PC-9 (cell line): ENCODE measurements at regions of chr18 and their contacts with region 1.

Region 1: GRCh38 chr18:63518178-63519012 is 23.8 kb upstream of the SERPINB12 start:
- DNase-seq: peak; percentile 45 to 67
- H3K4me3 ChIP-seq: no peak overlapping the region
- H3K27ac ChIP-seq: no peak overlapping the region
- H3K4me1 ChIP-seq: no peaks in the 10 kb centered on the region
- H3K27me3 ChIP-seq: no peaks in the 10 kb centered on the region
- CTCF ChIP-seq: peak; percentile 79

Region 2: GRCh38 chr18:63131106-63131958 is 387.1 kb before region 1 on chr18:
- CTCF ChIA-PET with region 1: no interaction called
- POLR2A ChIA-PET with region 1: no interaction called
- intact Hi-C with region 1: no loop called
- DNase-seq: peak in 1 of 2 experiments; percentile 7
- H3K4me3 ChIP-seq: no peak overlapping the region
- H3K27ac ChIP-seq: no peak overlapping the region
- H3K4me1 ChIP-seq: no peaks in the 10 kb centered on the region
- H3K27me3 ChIP-seq: no peaks in the 10 kb centered on the region
- CTCF ChIP-seq: peak; percentile 68

Region 3: GRCh38 chr18:63539904-63540510 is 21.6 kb after region 1 on chr18:
- CTCF ChIA-PET with region 1: interaction called, 11 read pairs
- POLR2A ChIA-PET with region 1: no interaction called
- intact Hi-C with region 1: no loop called
- DNase-seq: peak in 1 of 2 experiments; percentile 40
- H3K4me3 ChIP-seq: no peak overlapping the region
- H3K27ac ChIP-seq: no peak overlapping the region
- H3K4me1 ChIP-seq: peaks cover 8% of the 10 kb centered on the region; the same call in 1 of the 2 replicates
- H3K27me3 ChIP-seq: no peaks in the 10 kb centered on the region
- CTCF ChIP-seq: no peak

Region 4: DNA sequence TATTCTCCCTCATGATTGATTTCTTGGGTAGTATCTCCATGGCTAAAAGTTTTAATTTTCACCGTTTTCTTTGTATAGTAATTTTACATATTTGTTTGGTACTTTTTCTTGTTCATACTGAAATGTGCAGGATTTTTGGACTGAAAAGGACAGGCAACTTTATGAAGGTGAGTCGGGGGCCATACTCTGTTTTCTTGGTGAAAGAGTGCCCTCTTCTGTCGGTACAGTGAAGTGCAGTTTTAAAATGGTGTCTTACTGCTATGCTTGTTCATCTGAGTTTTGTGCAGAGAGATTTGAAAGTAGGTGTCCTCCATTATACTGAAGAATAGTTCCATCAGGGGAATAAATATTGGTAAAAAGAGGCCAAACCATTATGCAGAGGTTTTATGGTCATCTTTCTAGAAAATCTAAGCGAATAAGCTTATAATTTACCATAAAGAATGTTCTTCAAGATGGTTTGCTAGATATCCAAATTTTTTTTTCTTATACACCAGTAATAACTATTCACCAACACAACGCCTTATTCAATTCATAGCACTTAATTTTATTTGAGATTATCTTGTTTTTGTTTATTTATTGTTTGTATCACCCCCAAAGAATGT is 60.1 kb after region 1 on chr18:
- CTCF ChIA-PET with region 1: interaction called, 9 read pairs
- POLR2A ChIA-PET with region 1: no interaction called
- intact Hi-C with region 1: loop called (anchors 1 kb)
- DNase-seq: peak in 1 of 2 experiments; percentile 20
- H3K4me3 ChIP-seq: no peak overlapping the region
- H3K27ac ChIP-seq: no peak overlapping the region
- H3K4me1 ChIP-seq: no peaks in the 10 kb centered on the region
- H3K27me3 ChIP-seq: no peaks in the 10 kb centered on the region
- CTCF ChIP-seq: peak; percentile 90

Region 5: GRCh38 chr18:63676526-63676925 is 158.1 kb after region 1 on chr18:
- CTCF ChIA-PET with region 1: no interaction called
- POLR2A ChIA-PET with region 1: no interaction called
- intact Hi-C with region 1: loop called (anchors 1 kb)
- DNase-seq: peak in 1 of 2 experiments; percentile 16
- H3K4me3 ChIP-seq: no peak overlapping the region
- H3K27ac ChIP-seq: no peak overlapping the region
- H3K4me1 ChIP-seq: peaks cover 4% of the 10 kb centered on the region
- H3K27me3 ChIP-seq: no peaks in the 10 kb centered on the region
- CTCF ChIP-seq: peak; percentile 60

Region 6: DNA sequence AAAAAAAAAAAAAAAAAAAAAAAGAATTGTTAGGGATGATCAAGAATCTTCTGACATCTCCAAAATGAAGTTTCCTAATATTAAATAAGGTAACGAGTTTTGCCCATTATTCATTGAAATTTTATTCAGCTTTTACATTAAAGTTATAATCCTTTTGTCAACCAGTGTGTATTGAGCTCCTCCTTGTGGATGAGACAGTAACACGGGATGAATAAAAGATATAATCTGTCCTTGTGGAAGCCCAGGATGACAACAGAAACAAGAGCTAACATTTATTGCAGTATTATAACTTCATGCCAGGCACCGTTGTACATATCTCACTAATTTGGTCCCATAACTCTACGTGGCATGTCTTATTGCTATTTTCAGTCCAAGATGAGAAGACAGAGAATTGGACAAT is 223.4 kb after region 1 on chr18:
- CTCF ChIA-PET with region 1: interaction called, 24 read pairs
- POLR2A ChIA-PET with region 1: no interaction called
- intact Hi-C with region 1: loop called (anchors 1 kb)
- DNase-seq: no peak
- H3K4me3 ChIP-seq: no peak overlapping the region
- H3K27ac ChIP-seq: no peak overlapping the region
- H3K4me1 ChIP-seq: peaks cover 19% of the 10 kb centered on the region
- H3K27me3 ChIP-seq: no peaks in the 10 kb centered on the region
- CTCF ChIP-seq: peak; percentile 73

Region 7: DNA sequence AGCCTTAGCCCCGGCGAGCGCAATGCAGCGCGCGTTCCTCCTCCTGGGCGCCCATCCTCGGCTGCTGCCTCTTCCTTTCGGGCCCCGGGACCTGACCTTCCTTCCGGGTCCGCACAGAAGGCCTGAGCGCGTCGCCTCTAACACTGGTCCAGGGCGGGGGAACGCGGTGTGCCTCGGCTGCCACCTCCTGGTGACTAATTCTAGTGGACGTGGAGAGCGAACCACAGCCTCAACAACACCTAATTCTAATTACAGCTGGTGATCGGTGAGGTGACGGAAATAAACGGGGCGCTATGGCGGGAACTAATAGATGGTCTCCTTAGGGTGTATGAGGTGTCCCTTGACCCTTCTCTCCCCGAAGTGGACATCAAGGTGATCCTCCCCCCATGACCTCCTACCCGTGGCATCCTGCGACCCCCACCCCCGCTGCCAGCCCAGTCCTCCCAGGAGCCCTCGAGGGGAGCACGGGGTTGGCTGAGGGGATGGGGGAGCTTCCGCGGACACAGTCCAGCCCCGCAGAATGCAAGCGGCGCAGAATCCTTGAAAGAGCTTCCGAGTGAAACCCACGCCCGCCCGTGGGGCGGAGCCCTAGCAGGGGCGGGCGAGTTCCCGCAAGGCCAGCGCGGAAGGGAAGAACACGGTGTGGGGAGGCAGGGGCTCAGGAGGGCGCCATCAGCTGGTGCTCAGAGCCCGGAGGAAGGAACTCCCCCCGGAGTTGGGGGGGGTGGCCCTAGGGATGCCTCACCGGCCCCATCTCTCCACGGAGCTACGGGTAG is 417.9 kb after region 1 on chr18:
- CTCF ChIA-PET with region 1: interaction called, 4 read pairs
- POLR2A ChIA-PET with region 1: no interaction called
- intact Hi-C with region 1: loop called (anchors 5 kb)
- DNase-seq: peak; percentile 60 to 72
- H3K4me3 ChIP-seq: peak overlapping the region; percentile 44; the same call in 1 of the 2 replicates
- H3K27ac ChIP-seq: no peak overlapping the region
- H3K4me1 ChIP-seq: no peaks in the 10 kb centered on the region
- H3K27me3 ChIP-seq: no peaks in the 10 kb centered on the region
- CTCF ChIP-seq: peak; percentile 69

Region 8: DNA sequence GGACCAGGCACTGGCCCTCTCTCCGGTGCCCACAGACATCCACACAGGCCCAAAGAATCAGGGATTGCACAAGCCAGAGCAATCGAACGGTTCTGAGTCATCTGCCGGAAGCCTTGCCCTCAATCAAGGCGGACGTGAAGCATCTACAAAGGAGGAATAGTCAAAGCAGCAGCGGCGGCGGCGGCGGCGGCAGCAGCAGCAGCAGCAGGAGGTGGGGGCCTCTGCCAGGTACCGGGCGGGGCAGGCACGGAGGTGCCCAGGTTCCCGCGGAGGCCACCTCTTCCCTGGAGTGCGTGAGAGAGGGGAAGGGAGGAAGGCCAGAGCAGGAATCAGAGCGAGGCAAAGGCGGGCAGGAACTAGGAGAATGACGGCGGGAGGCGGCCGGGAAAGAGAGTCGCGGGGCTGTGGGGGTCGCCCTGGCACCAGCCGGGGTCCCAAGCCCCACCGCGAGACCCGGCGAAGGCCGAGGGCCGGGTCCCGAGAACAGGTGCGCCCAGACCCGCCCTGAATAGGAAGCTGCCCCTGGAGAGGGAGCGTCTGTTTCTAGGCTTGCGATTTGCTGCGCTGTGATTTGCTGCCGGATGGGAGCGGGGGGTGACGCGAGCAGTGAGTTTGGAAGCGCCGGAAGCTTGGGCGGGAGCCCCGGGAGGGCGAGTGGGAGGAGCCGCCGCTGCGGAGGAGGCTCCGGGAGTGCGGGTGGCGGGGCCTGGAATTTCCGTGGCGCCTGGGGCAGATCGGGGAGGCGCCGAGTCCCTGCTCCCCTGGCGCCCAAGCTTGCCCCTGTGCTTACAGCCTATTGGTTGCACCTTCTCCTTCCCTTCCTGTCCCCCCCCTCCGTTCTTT is 451.8 kb after region 1 on chr18 and contains the start of gene SERPINB8:
- CTCF ChIA-PET with region 1: interaction called, 3 read pairs
- POLR2A ChIA-PET with region 1: no interaction called
- intact Hi-C with region 1: loop called (anchors 10 kb)
- DNase-seq: peak; percentile 87 to 92
- H3K4me3 ChIP-seq: peak within 1 kb of the TSS; percentile 73
- H3K27ac ChIP-seq: peak within 1 kb of the TSS; percentile 97
- H3K4me1 ChIP-seq: peaks cover 18% of the 10 kb centered on the region
- H3K27me3 ChIP-seq: no peaks in the 10 kb centered on the region
- CTCF ChIP-seq: no peak
- total RNA-seq, gene SERPINB8: 5.1 and 7.2 TPM in 2 replicates